GM12878 (cell line): ENCODE measurements at regions of chr7 and their contacts with region 1.

Region 1: GRCh38 chr7:124276019-124276622 is 243.3 kb upstream of the TMEM229A start:
- DNase-seq: no peak
- ATAC-seq: peak; percentile 99
- H3K4me3 ChIP-seq: no peak overlapping the region
- H3K27ac ChIP-seq: no peak overlapping the region
- H3K4me1 ChIP-seq: no peaks in the 10 kb centered on the region
- H3K27me3 ChIP-seq: no peaks in the 10 kb centered on the region
- CTCF ChIP-seq: peak; percentile 58 to 77 (median 68)
- EP300 ChIP-seq: no peak
- POLR2A ChIP-seq: no peak
- RAD21 ChIP-seq: peak; percentile 58

Region 2: DNA sequence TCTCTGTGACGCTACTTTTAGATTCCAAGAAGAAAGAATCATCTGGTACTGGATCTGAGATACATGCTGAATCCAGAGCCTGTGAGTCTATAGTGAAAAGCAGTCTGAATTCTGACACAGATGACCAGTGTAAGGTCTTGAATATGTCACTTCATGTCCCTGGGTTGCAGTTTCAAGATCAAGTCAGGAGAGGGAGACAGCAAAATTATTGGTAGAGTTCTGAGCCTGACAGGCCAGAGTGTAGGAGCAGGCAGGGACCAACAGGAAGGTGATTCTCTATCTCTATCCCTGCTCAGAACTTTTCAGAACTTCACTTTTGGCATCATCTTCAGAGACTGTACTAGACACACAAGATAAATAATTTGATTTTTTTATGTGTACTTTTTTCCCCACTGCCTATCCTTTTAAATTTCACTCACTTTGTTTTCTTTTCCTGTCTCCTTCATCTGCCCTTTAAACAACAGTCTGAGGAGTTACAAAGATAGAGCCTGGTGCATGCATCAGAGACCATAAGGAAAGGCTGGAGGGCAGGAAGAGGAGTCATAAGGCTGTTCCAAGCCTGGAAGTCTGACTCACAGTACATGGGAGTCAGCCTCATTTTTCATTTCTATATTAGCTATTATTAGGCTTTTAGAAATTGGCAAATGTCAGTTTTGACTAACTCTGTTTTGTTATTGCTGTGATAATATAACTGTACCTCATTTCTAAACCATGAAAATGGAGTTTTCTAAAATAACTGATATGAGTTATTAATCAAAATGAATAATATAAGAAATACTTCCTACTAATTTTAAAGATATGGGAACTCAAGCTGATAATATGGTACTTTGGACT is 123.0 kb before region 1 on chr7:
- CTCF ChIA-PET with region 1: interaction called, 16 read pairs
- POLR2A ChIA-PET with region 1: no interaction called
- RAD21 ChIA-PET with region 1: interaction called, 5 read pairs
- SMC1A ChIA-PET with region 1: interaction called, 8 read pairs
- in situ Hi-C with region 1: no loop called
- intact Hi-C with region 1: loop called (anchors 2 kb)
- DNase-seq: no peak
- ATAC-seq: peak; percentile 88
- H3K4me3 ChIP-seq: no peak overlapping the region
- H3K27ac ChIP-seq: no peak overlapping the region
- H3K4me1 ChIP-seq: no peaks in the 10 kb centered on the region
- H3K27me3 ChIP-seq: no peaks in the 10 kb centered on the region
- CTCF ChIP-seq: peak; percentile 34 to 44 (median 40); a peak in 4 of 6 replicates
- EP300 ChIP-seq: no peak
- POLR2A ChIP-seq: no peak
- RAD21 ChIP-seq: peak; percentile 49

Region 3: DNA sequence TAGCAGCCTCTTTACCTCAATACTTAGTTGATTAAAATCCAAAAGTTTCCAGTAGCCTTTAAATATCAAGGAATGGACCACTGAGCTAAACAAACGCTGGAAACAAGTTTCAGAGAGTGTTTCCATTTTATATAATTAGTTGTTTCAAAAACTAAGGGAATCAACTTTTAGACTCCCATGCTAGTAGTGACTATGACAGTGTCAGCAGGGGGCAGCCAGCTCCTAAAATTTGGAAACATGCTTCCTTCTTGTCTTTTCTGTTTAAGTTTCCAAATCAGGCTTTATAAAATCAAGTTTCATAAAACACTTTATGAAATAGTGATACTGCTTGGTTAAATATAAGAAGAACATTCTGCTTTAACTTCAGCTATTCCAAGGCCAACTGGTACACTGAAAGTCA is 105.1 kb before region 1 on chr7:
- CTCF ChIA-PET with region 1: interaction called, 14 read pairs
- POLR2A ChIA-PET with region 1: no interaction called
- RAD21 ChIA-PET with region 1: interaction called, 5 read pairs
- SMC1A ChIA-PET with region 1: interaction called, 8 read pairs
- in situ Hi-C with region 1: no loop called
- intact Hi-C with region 1: loop called (anchors 5 kb)
- DNase-seq: no peak
- ATAC-seq: peak; percentile 55; the same call in 1 of the 3 replicates
- H3K4me3 ChIP-seq: no peak overlapping the region
- H3K27ac ChIP-seq: no peak overlapping the region
- H3K4me1 ChIP-seq: no peaks in the 10 kb centered on the region
- H3K27me3 ChIP-seq: no peaks in the 10 kb centered on the region
- CTCF ChIP-seq: peak; percentile 4 to 42 (median 35); a peak in 4 of 6 replicates
- EP300 ChIP-seq: no peak
- POLR2A ChIP-seq: no peak
- RAD21 ChIP-seq: peak; percentile 75

Region 4: GRCh38 chr7:124251636-124252035 is 24.5 kb before region 1 on chr7:
- CTCF ChIA-PET with region 1: interaction called, 11 read pairs
- POLR2A ChIA-PET with region 1: no interaction called
- RAD21 ChIA-PET with region 1: interaction called, 3 read pairs
- SMC1A ChIA-PET with region 1: interaction called, 7 read pairs
- in situ Hi-C with region 1: no loop called
- intact Hi-C with region 1: no loop called
- DNase-seq: no peak
- ATAC-seq: no peak
- H3K4me3 ChIP-seq: no peak overlapping the region
- H3K27ac ChIP-seq: no peak overlapping the region
- H3K4me1 ChIP-seq: no peaks in the 10 kb centered on the region
- H3K27me3 ChIP-seq: no peaks in the 10 kb centered on the region
- CTCF ChIP-seq: no peak
- EP300 ChIP-seq: no peak
- POLR2A ChIP-seq: no peak
- RAD21 ChIP-seq: no peak

Region 5: GRCh38 chr7:124263232-124263827 is 12.8 kb before region 1 on chr7:
- CTCF ChIA-PET with region 1: interaction called, 20 read pairs
- POLR2A ChIA-PET with region 1: interaction called, 3 read pairs
- RAD21 ChIA-PET with region 1: interaction called, 4 read pairs
- SMC1A ChIA-PET with region 1: interaction called, 9 read pairs
- in situ Hi-C with region 1: no loop called
- intact Hi-C with region 1: no loop called
- DNase-seq: peak; percentile 31
- ATAC-seq: peak; percentile 98
- H3K4me3 ChIP-seq: no peak overlapping the region
- H3K27ac ChIP-seq: no peak overlapping the region
- H3K4me1 ChIP-seq: no peaks in the 10 kb centered on the region
- H3K27me3 ChIP-seq: no peaks in the 10 kb centered on the region
- CTCF ChIP-seq: no peak
- EP300 ChIP-seq: peak; percentile 26 to 63; a peak in 2 of 4 replicates
- POLR2A ChIP-seq: no peak
- RAD21 ChIP-seq: no peak